Caco-2 (cell line): ENCODE measurements at regions of chr20 and their contacts with region 1.

Region 1: DNA sequence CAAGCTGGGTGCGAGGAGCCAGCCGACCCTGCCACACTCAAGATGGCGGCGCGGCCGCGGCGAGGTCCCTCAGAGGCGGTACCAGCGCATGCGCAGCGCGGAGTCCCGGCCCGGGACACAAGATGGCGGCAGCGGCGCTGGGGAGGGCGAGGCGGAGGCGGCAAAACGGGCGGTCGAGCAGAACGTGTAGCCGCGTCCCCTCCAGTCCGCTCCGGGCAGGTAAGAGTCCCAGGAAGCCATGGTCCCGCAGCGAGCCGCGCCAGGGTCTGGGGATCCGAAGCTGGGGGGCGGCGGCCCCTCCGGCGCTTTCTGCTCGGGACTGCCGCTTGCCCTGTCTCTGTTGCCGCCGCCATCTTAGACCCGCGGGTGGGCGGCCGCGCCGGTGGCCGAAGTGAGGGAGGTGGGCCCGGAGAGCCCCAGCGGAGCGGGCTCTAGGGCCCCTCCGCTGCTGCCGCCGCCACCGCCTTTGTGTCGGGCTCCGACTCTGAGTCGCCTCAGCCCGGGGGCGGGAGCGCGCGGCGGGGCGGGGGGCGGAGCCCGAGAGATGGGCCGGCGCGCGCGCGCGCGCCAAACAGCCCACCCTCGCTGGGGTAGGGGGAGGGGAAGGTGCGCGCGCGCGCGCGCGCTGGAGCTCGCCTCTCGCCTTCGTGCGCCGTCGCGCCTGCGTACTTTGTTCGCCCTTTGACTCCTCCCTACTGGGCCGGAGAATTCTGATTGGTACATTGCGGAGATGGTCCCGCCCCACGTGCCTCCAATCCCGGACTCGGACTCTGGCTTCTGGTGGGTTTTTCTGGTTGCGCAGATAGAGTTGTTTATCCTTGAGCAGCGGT is at the start of gene PCIF1:
- DNase-seq: peak; percentile 100
- H3K4me3 ChIP-seq: peak within 1 kb of the TSS; percentile 95
- H3K4me3 Mint-ChIP-seq: peak within 1 kb of the TSS; percentile 100
- H3K27ac Mint-ChIP-seq: peak within 1 kb of the TSS; percentile 99
- H3K4me1 ChIP-seq: peaks cover 26% of the 10 kb centered on the region
- H3K4me1 Mint-ChIP-seq: peaks cover 13% of the 10 kb centered on the region
- H3K27me3 ChIP-seq: no peaks in the 10 kb centered on the region
- H3K27me3 Mint-ChIP-seq: no peaks in the 10 kb centered on the region
- CTCF ChIP-seq: no peak
- total RNA-seq, gene PCIF1: 66.5 and 75.9 TPM in 2 replicates

Region 2: DNA sequence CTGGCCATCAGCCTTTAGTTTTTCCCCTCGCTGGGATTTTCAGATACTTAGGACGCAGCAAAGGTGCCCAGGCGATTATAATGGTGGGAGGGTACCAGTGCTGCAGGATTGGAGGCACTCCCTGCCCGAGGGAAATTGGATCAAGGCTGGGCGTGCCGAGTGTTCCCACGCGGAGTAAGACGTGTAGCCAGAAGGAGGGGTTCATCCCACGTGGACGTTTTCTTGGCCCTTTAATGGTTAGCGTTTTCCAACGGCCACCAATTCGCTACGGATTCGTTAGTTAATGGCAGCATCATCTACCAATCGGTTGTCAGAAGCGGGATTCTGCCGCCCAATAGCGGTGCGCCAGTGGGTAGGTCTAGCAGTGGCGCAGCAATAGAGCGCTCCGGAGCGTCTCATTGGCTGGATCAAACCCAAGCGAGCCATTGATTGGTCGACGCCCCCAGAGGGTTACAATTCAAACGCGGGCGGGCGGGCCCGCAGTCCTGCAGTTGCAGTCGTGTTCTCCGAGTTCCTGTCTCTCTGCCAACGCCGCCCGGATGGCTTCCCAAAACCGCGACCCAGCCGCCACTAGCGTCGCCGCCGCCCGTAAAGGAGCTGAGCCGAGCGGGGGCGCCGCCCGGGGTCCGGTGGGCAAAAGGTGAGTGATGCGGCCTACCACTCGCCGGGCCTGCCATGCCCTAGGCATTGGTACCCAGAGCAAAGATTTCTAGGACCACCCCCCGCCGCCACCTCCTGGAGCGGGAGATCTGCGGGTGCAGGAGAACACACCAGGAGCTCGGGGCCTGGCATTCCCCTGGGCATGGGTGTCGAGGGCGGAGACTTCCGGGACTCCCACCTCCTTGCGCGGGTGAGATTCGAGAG is 122.4 kb before region 1 on chr20 and contains the start of gene UBE2C:
- CTCF ChIA-PET with region 1: no interaction called
- POLR2A ChIA-PET with region 1: no interaction called
- intact Hi-C with region 1: loop called (anchors 1 kb)
- DNase-seq: peak; percentile 100
- H3K4me3 ChIP-seq: peak within 1 kb of the TSS; percentile 91
- H3K4me3 Mint-ChIP-seq: peak within 1 kb of the TSS; percentile 95
- H3K27ac Mint-ChIP-seq: peak within 1 kb of the TSS; percentile 92
- H3K4me1 ChIP-seq: peaks cover 28% of the 10 kb centered on the region
- H3K4me1 Mint-ChIP-seq: peaks cover 20% of the 10 kb centered on the region
- H3K27me3 ChIP-seq: no peaks in the 10 kb centered on the region
- H3K27me3 Mint-ChIP-seq: no peaks in the 10 kb centered on the region
- CTCF ChIP-seq: no peak
- total RNA-seq, gene UBE2C: 409 and 423 TPM in 2 replicates

Region 3: GRCh38 chr20:45857114-45857881 is 77.5 kb before region 1 on chr20 and contains the starts of genes ACOT8 and ZSWIM3:
- CTCF ChIA-PET with region 1: no interaction called
- POLR2A ChIA-PET with region 1: interaction called, 5 read pairs
- intact Hi-C with region 1: loop called (anchors 1 kb)
- DNase-seq: peak; percentile 100
- H3K4me3 ChIP-seq: peak within 1 kb of the TSS; percentile 65
- H3K4me3 Mint-ChIP-seq: peak within 1 kb of the TSS; percentile 95
- H3K27ac Mint-ChIP-seq: peak within 1 kb of the TSS; percentile 85
- H3K4me1 ChIP-seq: peaks cover 17% of the 10 kb centered on the region
- H3K4me1 Mint-ChIP-seq: peaks cover 19% of the 10 kb centered on the region
- H3K27me3 ChIP-seq: no peaks in the 10 kb centered on the region
- H3K27me3 Mint-ChIP-seq: no peaks in the 10 kb centered on the region
- CTCF ChIP-seq: no peak
- total RNA-seq, gene ACOT8: 35.1 and 36.2 TPM in 2 replicates
- total RNA-seq, gene ZSWIM3: 6.1 and 6.4 TPM in 2 replicates

Region 4: DNA sequence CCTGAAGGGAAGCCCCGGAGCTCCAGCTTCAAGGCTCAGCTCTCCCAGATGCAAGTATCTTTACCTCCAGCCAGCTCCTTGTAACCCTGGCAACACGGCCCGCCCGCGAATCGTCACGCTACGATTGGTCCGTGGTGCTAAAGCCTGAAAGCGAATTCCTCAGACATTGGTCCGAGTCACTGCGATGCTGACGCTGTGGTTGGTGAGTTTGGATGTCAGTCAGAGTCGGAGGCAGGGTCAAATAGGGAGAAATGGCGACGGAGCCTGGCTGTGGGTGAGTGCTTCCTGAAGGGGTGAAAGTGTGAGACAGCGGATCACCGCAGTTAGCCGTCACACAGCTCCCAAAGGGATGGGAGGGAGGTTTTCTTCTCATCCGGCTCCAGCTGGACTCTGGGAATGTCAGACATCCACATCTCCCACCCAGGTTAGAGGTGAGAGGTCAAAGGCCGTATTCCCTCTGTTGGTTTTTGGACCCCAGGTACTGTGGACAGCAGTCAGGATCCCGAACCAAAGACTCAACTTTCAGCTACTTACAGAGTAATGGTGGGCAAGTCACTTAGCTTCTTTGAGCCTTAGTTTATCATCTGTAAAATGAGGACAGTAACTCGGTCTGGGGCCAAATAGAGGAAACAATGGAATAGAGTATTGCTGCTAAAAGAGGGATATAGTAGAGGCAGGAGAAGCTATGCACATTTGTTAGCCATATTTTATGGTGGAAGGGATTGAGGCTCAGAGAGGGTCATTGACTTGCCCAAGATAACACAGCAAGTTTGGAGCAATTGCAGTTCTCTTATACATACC is 53.6 kb before region 1 on chr20 and contains the start of gene ZSWIM1:
- CTCF ChIA-PET with region 1: interaction called, 6 read pairs
- POLR2A ChIA-PET with region 1: interaction called, 30 read pairs
- intact Hi-C with region 1: no loop called
- DNase-seq: peak; percentile 100
- H3K4me3 ChIP-seq: peak within 1 kb of the TSS; percentile 66
- H3K4me3 Mint-ChIP-seq: peak within 1 kb of the TSS; percentile 96
- H3K27ac Mint-ChIP-seq: peak within 1 kb of the TSS; percentile 95
- H3K4me1 ChIP-seq: no peaks in the 10 kb centered on the region
- H3K4me1 Mint-ChIP-seq: peaks cover 19% of the 10 kb centered on the region
- H3K27me3 ChIP-seq: no peaks in the 10 kb centered on the region
- H3K27me3 Mint-ChIP-seq: no peaks in the 10 kb centered on the region
- CTCF ChIP-seq: no peak
- total RNA-seq, gene ZSWIM1: 24.8 and 27.3 TPM in 2 replicates

Region 5: DNA sequence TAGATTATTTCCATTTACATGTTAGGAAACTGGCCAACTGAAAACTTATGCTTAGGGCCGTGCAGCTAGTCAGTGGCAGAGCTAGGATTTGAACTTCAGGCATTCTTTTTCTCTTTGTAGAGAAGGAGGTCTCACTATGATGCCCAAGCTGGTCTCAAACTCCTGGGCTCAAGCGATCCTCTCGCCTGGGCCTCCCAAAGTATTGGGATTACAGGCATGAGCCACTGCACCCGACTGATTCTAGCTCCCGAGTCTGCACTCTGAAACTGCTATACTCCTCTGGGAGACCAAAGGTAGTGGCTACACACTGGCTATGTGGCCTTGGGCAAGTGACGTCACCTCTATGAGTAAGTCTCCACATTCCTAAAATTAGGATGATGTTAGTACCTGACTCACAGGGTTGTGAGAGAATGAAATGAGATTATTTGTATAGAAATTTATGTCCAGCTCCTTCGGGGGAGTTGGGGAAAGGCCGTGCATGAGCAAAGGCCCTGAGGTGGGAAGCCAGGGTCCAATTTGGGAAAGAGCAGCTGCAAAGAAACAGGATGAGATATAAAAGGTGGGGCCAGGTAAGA is 29.2 kb before region 1 on chr20:
- CTCF ChIA-PET with region 1: interaction called, 3 read pairs
- POLR2A ChIA-PET with region 1: interaction called, 12 read pairs
- intact Hi-C with region 1: no loop called
- DNase-seq: no peak
- H3K4me3 ChIP-seq: no peak overlapping the region
- H3K4me3 Mint-ChIP-seq: no peak overlapping the region
- H3K27ac Mint-ChIP-seq: no peak overlapping the region
- H3K4me1 ChIP-seq: no peaks in the 10 kb centered on the region
- H3K4me1 Mint-ChIP-seq: peaks cover 9% of the 10 kb centered on the region
- H3K27me3 ChIP-seq: no peaks in the 10 kb centered on the region
- H3K27me3 Mint-ChIP-seq: no peaks in the 10 kb centered on the region
- CTCF ChIP-seq: no peak

Region 6: GRCh38 chr20:45924391-45925261 is 10.2 kb before region 1 on chr20:
- CTCF ChIA-PET with region 1: interaction called, 6 read pairs
- POLR2A ChIA-PET with region 1: interaction called, 17 read pairs
- intact Hi-C with region 1: no loop called
- DNase-seq: no peak
- H3K4me3 ChIP-seq: no peak overlapping the region
- H3K4me3 Mint-ChIP-seq: no peak overlapping the region
- H3K27ac Mint-ChIP-seq: no peak overlapping the region
- H3K4me1 ChIP-seq: peaks cover 34% of the 10 kb centered on the region
- H3K4me1 Mint-ChIP-seq: peaks cover 15% of the 10 kb centered on the region
- H3K27me3 ChIP-seq: no peaks in the 10 kb centered on the region
- H3K27me3 Mint-ChIP-seq: no peaks in the 10 kb centered on the region
- CTCF ChIP-seq: no peak

Region 7: DNA sequence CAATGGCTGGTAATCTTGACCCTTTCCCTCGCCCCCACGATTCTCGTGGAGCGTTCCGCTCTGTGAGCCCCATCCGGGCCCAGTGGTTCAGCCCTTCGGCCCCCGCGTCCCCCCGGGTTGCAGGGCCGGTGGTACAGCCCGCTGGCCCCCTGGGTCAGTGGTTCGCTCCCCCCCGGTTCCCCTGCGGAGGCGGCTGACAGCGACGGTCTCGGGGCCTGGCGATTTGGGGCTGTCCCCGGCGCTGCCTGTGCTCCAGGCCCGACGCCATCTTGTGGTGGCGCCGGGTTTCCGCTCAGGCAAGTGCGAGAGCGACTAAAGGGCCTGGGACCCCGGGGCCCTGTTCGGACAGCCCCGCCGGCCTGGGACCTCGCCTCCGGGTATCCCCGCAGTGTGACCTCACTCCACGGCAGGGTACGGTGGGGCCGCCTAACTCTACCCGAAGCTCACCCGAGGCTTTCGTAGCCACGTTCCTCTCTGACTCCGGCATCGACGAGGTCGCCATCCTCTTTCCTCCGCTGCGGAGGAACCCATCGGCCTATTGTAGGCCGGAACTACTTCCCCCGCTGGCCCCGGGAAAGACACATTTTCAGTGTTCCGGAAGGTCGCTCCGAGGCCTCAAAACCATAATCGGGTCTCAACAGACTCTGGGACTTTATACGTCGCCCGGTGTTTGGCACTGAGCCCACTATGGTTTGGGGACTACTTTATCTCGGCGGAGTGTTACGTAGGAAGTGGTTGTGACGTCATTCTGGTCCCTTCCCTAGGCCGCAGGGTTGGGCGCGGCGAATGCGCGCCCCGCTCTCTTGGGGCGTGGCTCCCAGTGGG is 37.1 kb after region 1 on chr20 and contains the start of gene ZNF335:
- CTCF ChIA-PET with region 1: interaction called, 63 read pairs
- POLR2A ChIA-PET with region 1: interaction called, 22 read pairs
- intact Hi-C with region 1: loop called (anchors 1 kb)
- DNase-seq: peak; percentile 99 to 100
- H3K4me3 ChIP-seq: peak within 1 kb of the TSS; percentile 54
- H3K4me3 Mint-ChIP-seq: peak within 1 kb of the TSS; percentile 80
- H3K27ac Mint-ChIP-seq: peak within 1 kb of the TSS; percentile 81
- H3K4me1 ChIP-seq: peaks cover 7% of the 10 kb centered on the region; the same call in 1 of the 2 replicates
- H3K4me1 Mint-ChIP-seq: peaks cover 13% of the 10 kb centered on the region
- H3K27me3 ChIP-seq: no peaks in the 10 kb centered on the region
- H3K27me3 Mint-ChIP-seq: peaks cover 5% of the 10 kb centered on the region
- CTCF ChIP-seq: peak; percentile 29 to 55
- total RNA-seq, gene ZNF335: 35.1 and 38.1 TPM in 2 replicates

Region 8: GRCh38 chr20:46349035-46349741 is 414.4 kb after region 1 on chr20:
- CTCF ChIA-PET with region 1: no interaction called
- POLR2A ChIA-PET with region 1: no interaction called
- intact Hi-C with region 1: no loop called
- DNase-seq: peak in 1 of 2 experiments; percentile 81
- H3K4me3 ChIP-seq: no peak overlapping the region
- H3K4me3 Mint-ChIP-seq: no peak overlapping the region
- H3K27ac Mint-ChIP-seq: no peak overlapping the region
- H3K4me1 ChIP-seq: peaks cover 17% of the 10 kb centered on the region
- H3K4me1 Mint-ChIP-seq: peaks cover 25% of the 10 kb centered on the region
- H3K27me3 ChIP-seq: no peaks in the 10 kb centered on the region; the same call in 1 of the 2 replicates
- H3K27me3 Mint-ChIP-seq: peaks cover 6% of the 10 kb centered on the region
- CTCF ChIP-seq: peak; percentile 91 to 92